ENCODE measurements at regions of chr1 and their contacts with region 1.

Region 1: DNA sequence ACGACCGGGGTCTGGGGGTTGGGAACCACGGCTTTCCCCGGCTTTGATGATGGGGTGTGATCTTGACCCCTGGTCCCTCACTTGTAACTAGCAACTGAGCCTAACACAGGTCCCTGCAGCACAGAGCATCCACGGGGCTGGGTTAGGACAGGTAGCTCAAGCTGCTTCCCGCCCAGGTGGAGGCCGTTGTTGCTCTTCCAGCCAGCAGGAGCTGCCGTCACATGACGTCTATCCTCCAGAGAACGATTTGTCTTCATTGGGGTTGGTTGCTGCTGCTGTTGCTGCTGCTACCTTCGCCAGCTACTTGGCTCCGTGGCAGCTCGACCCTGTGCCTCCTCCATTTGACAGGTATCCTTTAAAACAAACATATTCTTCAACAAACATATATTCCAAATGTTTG is 74.3 kb upstream of the ADAR start:
- DNase-seq: no peak
- H3K4me3 ChIP-seq: no peak overlapping the region
- H3K27ac ChIP-seq: no peak overlapping the region
- H3K4me1 ChIP-seq: no peaks in the 10 kb centered on the region
- H3K27me3 ChIP-seq: no peaks in the 10 kb centered on the region
- CTCF ChIP-seq: no peak

Region 2: GRCh38 chr1:154859786-154860155 is 177.5 kb after region 1 on chr1:
- CTCF ChIA-PET with region 1: no interaction called
- dilution Hi-C with region 1: loop called (anchors 10 kb)
- in situ Hi-C with region 1: no loop called
- intact Hi-C with region 1: no loop called
- DNase-seq: no peak
- H3K4me3 ChIP-seq: no peak overlapping the region
- H3K27ac ChIP-seq: no peak overlapping the region
- H3K4me1 ChIP-seq: no peaks in the 10 kb centered on the region
- H3K27me3 ChIP-seq: no peaks in the 10 kb centered on the region
- CTCF ChIP-seq: no peak